Left cardiac atrium (tissue), 4 donors: ENCODE measurements at regions of chr14 and their contacts with region 1.

Region 1: DNA sequence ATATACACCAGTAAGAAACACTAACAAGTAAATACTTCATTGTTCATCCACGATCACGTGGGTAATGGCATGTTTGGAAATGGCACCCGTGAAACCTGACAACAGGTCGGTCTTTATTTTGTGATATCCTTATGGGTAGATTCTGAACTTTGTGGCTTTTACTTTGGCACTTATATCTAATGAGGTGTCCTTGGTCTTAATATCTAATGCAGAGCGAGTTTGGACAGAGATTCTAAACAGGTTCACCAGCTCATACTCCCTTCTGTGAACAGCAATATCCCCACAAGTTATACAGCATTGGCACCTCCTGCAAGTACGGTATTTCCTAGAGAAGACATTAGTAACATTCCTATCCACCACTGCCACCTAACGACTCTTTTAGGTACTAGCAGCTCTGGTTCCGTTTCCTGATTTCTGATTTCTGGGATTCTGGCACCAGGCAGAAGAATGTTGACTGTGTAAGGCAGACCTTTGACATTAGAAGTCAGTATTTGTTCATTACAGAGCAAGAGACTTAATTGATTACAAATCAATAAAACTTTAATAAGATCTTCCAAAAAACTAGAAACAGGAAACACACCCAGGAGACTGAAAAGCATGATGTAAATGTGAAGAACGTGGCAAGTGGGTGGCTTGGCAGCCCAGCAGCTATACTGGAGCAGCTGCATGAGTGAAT is 2.4 kb downstream of the ANG start:
- DNase-seq: no peak
- ATAC-seq: peak; percentile 81 to 89

Region 2: DNA sequence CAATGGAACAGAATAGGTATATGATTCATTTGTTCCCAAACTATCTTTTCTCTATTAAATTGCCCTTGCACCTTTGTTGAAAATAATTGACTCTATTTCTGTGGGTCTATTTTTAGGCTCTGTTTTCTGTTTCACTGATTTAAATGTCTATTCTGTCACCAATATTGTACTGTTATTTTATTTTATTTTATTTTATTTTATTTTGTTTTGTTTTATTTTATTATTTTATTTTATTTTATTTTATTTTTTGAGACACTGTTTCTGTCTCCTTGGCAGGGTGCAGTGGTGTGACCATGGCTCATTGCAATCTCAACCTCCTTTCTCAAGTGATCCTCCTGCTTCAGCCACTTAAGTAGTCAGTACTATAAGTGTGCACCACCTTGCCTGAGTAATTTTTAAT is 852.6 kb before region 1 on chr14:
- intact Hi-C with region 1: no loop called
- DNase-seq: no peak
- ATAC-seq: no peak

Region 3: GRCh38 chr14:20970983-20971704 is 280.2 kb after region 1 on chr14:
- intact Hi-C with region 1: loop called in 1 of 2 experiments (anchors 10 kb)
- DNase-seq: peak; percentile 88
- ATAC-seq: peak; percentile 96

Region 4: GRCh38 chr14:21039585-21040369 is 348.8 kb after region 1 on chr14:
- intact Hi-C with region 1: loop called in 1 of 2 experiments (anchors 10 kb)
- DNase-seq: no peak
- ATAC-seq: peak; percentile 72 to 78